ENCODE measurements at regions of chr4 and their contacts with region 1.

Region 1: DNA sequence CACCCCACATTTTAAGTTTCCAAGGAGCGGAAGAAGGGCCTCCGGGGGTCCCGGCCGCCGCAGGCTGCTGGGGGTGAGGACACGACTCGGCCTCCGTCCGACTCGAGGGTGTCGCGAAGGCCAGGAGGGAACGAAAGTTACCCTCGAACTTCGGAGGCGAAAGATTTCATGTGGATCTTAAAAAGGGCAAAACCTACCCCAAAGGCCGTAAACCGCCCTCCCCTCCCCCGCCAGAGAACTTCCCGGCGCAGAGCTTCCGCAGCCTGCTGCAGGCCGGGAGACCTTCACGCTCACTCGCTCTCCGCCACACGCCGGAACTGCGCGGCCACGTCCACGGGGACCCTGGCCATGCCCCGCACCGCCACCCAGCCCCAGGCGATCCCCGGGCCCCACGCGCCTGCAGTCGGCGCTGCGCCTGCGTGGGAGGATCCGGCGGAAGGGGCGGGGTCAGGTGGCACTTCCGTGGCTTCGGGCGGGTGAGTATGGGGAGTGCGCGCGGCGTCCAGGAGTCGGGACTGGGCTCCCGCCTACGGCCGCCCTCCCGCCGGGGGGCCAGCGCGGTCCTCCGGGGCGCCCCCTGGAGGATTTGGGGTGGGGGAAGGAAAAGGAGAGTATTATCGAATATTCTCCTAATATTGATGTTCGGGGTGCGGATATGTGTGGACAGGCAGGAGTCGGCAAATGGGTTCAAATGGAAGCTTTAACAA is at the start of gene MMAA:
- DNase-seq: peak; percentile 96
- H3K4me3 ChIP-seq: peak within 1 kb of the TSS; percentile 69 to 96 (median 75)
- H3K27ac ChIP-seq: peak within 1 kb of the TSS; percentile 92 to 98 (median 97)
- H3K4me1 ChIP-seq: peaks cover 12 to 18% of the 10 kb centered on the region in 2 donors
- H3K27me3 ChIP-seq: no peaks in the 10 kb centered on the region
- CTCF ChIP-seq: peak; percentile 26 to 68 (median 56)
- POLR2A ChIP-seq: peak; percentile 80 to 98
- total RNA-seq, gene MMAA: 5.6 to 10.9 (median 7.6) TPM

Region 2: DNA sequence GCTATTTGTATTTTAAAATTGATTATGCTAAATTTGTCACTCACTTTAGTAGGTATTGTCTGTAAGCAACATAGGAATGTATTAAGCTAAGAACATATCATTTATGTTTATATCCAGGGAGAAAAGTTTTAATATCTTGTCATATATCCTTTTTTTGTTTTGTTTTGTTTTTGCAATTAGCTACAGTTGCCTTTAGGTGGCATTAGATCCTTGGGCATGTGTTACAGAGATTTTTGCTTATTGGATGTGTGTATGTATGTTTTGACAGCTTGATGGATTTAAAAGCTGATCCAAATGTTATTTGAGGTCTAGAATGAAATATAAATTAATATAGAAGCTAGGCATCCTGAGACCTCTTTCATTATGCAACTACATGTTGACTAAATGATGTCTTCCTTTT is 402.6 kb before region 1 on chr4:
- intact Hi-C with region 1: loop called (anchors 10 kb)
- DNase-seq: no peak
- H3K4me3 ChIP-seq: no peak overlapping the region
- H3K27ac ChIP-seq: no peak overlapping the region
- H3K4me1 ChIP-seq: no peaks in the 10 kb centered on the region
- H3K27me3 ChIP-seq: no peaks in the 10 kb centered on the region
- CTCF ChIP-seq: peak in 3 of 6 experiments; percentile 47 to 58 (median 49)
- POLR2A ChIP-seq: no peak